ENCODE measurements at regions of chr14 and their contacts with region 1.

Region 1: DNA sequence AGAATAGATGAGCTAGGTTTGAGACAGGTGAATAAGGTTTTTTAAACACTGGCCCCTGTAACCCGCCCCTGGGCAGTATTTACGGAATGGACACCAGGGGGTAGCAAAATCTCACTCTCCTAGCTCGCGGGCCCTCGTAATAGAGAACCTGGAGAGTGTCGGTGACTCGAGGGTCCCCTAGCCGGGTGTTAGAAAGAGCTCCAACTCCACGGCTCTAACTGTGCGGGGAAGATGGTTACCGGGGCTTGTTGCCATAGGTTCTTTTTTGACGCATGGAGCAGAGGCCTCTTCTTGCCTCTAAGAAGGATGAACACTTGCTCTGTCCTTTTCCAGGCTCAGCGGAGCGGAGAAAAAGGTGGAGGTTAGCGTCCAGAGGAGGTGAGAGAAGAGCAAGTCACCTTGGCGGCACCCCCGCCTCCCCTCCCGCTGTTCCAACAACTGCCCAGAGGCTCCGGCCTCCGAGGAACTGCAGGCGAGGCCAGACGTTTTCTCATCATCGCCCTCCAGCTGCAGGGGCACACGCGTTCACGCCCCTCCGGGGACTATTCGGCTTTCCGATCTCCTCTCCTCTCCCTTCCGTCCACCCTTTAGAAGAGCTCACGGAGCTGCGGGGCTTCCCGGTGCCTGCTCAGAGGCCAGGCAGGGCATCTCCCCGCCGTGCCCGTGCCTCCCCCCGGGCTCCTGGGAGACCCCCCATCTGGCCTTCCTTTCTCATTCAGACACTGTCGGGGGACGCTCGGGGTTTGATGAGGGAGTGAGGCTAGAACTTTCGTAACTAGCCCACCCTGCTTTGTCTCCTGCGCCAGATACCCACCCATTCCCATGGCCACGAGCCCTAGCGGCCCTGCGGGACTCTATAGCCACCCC is 1.4 kb upstream of the ARHGEF40 start:
- DNase-seq: no peak
- H3K4me3 Mint-ChIP-seq: peak overlapping the region; percentile 70
- H3K27ac Mint-ChIP-seq: peak overlapping the region; percentile 29
- H3K4me1 Mint-ChIP-seq: peaks cover 32% of the 10 kb centered on the region
- H3K27me3 Mint-ChIP-seq: peaks cover 70% of the 10 kb centered on the region

Region 2: DNA sequence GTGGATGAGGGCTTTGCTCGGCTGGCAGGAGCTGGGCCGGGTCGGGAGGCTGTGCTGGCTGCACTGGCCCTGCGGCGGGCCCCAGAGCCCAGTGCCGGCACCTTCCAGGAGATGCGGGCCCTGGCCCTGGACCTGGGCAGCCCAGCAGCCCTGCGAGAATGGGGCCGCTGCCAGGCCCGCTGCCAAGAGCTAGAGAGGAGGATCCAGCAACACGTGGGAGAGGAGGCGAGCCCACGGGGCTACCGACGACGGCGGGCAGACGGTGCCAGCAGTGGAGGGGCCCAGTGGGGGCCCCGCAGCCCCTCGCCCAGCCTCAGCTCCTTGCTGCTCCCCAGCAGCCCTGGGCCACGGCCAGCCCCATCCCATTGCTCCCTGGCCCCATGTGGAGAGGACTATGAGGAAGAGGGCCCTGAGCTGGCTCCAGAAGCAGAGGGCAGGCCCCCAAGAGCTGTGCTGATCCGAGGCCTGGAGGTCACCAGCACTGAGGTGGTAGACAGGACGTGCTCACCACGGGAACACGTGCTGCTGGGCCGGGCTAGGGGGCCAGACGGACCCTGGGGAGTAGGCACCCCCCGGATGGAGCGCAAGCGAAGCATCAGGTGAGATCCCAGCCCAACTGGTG is 12.9 kb after region 1 on chr14:
- intact Hi-C with region 1: no loop called
- DNase-seq: no peak
- H3K4me3 Mint-ChIP-seq: no peak overlapping the region
- H3K27ac Mint-ChIP-seq: no peak overlapping the region
- H3K4me1 Mint-ChIP-seq: peaks cover 3% of the 10 kb centered on the region
- H3K27me3 Mint-ChIP-seq: peaks cover 2% of the 10 kb centered on the region

Region 3: DNA sequence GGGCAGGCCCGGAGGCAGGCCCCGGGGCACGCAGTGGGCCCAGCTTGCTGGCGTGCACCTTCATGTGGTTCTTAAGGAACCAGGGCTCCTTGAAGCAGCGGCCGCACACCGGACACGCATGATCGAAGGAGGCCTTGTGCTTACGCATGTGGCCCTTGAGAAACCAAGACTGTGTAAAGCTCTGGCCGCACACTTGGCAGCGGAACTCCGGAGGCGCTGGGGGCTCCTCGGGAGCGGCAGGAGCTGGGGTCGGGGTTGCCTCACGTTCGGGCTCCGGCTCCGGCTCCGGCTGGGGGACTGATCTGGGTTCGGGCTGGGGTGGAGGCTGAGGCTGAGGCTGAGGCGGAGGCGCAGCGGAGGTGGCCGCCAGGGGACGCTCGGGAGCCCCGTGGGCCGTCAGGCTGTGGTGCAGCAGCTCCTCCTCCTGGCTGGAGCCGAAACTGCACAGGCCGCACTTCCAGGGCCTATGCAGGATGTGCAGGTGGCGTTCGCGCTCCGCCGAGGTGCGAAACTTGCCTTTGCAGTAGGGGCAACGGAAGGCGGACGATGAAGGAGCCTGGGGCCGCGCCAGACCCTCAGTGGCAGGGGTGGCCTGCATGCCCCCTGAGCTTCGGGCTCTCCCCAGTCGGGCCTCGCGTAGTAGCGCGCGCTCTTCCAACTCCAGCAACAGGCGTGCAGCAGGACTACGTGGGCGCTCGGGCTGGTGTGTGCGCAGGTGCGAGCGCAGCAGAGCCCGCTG is 23.7 kb after region 1 on chr14:
- intact Hi-C with region 1: loop called (anchors 1 kb)
- DNase-seq: peak; percentile 87
- H3K4me3 Mint-ChIP-seq: no peak overlapping the region
- H3K27ac Mint-ChIP-seq: no peak overlapping the region
- H3K4me1 Mint-ChIP-seq: peaks cover 23% of the 10 kb centered on the region
- H3K27me3 Mint-ChIP-seq: peaks cover 8% of the 10 kb centered on the region

Measured in activated T-helper 1 cell treated with anti-CD3 and anti-CD28 coated beads, Interleukin-12 subunit alpha, Interleukin-12 subunit beta, Interleukin-2, Interleukin-4 antibody, amounts not matched to agents 30 ng/mL and 10 ng/mL and 1 ng/mL, durations not matched to agents 14 hours and 24 hours and 36 hours (primary cell).